Mammary epithelial cell (primary cell): ENCODE measurements at regions of chr3 and their contacts with region 1.

Region 1: GRCh38 chr3:114432310-114432709 is 138.5 kb downstream of the TIGIT start:
- DNase-seq: no peak
- H3K4me3 ChIP-seq: no peak overlapping the region
- H3K27ac ChIP-seq: no peak overlapping the region
- H3K4me1 ChIP-seq: no peaks in the 10 kb centered on the region
- H3K27me3 ChIP-seq: no peaks in the 10 kb centered on the region
- CTCF ChIP-seq: no peak

Region 2: GRCh38 chr3:114519415-114519814 is 87.1 kb after region 1 on chr3:
- CTCF ChIA-PET with region 1: no interaction called
- dilution Hi-C with region 1: loop called (anchors 5 kb)
- in situ Hi-C with region 1: no loop called
- intact Hi-C with region 1: no loop called
- DNase-seq: peak; percentile 81
- H3K4me3 ChIP-seq: no peak overlapping the region
- H3K27ac ChIP-seq: peak overlapping the region; percentile 11
- H3K4me1 ChIP-seq: no peaks in the 10 kb centered on the region
- H3K27me3 ChIP-seq: no peaks in the 10 kb centered on the region
- CTCF ChIP-seq: no peak